Activated CD8-positive, alpha-beta T cell treated with anti-CD3 and anti-CD28 coated beads for 36 hours (primary cell): ENCODE measurements at regions of chr4 and their contacts with region 1.

Region 1: DNA sequence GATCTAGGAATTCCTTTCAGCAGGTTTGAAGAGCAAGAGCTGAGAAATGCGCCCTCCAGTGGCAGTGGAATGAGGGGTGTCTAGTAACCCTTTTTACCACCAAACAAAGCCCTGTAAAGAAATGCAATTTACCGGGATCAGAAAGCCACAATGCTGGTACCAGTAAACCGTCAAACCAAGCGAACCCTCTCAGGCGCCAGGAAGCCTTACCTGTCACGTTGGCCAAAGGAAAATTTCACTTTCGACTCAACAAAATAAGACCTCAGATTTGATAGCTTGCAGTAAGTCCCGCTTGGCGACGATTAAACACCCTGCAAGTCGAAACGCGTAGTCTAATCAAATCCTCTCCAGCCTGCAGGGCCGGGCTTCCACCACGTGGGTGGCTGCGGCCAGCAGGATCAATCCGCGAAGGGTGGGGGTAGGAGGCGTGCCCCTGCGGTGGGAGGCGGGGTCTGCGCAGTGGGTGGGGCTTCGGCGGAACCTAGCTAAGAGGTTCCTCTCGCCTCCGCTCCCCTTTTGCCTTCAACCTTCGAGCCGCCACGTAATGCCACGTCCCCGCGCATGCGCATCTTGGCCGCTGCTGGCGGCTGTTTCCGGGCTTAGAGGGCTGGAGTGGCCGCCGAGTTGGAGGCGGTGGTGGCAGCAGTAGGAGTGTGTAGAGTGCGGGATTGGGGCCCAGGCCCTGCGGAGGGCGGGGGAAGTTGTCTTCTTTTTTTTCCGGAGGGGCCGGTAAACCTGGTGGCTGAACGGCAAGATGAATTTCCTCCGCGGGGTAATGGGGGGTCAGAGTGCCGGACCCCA is at the start of gene USO1:
- DNase-seq: peak; percentile 99
- ATAC-seq: peak; percentile 95
- H3K4me3 Mint-ChIP-seq: peak within 1 kb of the TSS; percentile 91
- H3K27ac Mint-ChIP-seq: peak within 1 kb of the TSS; percentile 96
- H3K4me1 Mint-ChIP-seq: peaks cover 44% of the 10 kb centered on the region
- H3K27me3 Mint-ChIP-seq: no peaks in the 10 kb centered on the region
- CTCF ChIP-seq: peak; percentile 82
- total RNA-seq, gene USO1: 50.5 to 52.0 TPM

Region 2: DNA sequence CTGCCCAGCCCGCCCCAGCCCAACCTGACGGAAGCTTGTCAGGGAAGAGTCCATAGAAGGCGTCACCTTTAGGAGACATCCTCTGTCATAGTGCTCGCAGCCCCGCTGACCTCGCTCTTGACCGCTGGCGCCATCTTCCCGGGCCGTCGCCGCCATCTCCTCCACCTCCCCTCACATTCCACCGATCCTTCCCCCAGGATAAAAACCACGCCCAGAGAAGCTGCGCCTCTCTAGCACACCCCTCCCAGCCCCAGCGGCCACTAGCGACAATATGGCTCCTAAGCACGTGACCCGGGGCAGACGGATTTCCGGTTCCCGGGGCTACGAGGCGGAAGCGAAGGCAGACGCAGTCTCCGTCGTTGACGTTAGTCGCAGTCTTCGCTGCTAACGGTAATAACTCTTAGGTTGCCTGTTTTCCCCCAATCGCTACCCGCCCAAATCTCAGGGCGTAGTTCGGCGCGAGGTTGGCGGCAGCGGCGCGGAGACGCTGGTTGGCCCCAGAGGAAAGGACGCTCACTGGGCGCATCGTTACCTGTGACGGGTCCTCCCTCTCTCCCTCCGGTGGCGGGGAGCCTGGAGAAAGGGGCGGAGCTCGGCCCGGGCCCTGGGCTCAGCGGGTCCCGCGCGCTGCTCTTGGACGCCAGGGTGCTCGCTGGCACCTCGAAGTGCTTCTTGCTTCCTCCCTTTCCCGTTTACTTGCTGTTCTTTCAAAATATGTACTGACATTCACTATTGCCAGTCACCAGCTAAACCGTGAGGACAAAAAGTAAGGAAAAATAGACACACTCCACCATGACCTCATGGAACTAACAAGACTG is 209.9 kb before region 1 on chr4 and contains the starts of genes RCHY1 and THAP6:
- CTCF ChIA-PET with region 1: interaction called, 12 read pairs
- POLR2A ChIA-PET with region 1: interaction called, 7 read pairs
- intact Hi-C with region 1: no loop called
- DNase-seq: peak; percentile 94
- ATAC-seq: peak; percentile 91
- H3K4me3 Mint-ChIP-seq: no peak within 1 kb of the TSS
- H3K27ac Mint-ChIP-seq: peak within 1 kb of the TSS; percentile 94
- H3K4me1 Mint-ChIP-seq: peaks cover 50% of the 10 kb centered on the region
- H3K27me3 Mint-ChIP-seq: no peaks in the 10 kb centered on the region
- CTCF ChIP-seq: no peak
- total RNA-seq, gene RCHY1: 33.1 to 33.3 TPM
- total RNA-seq, gene THAP6: 16.6 to 19.1 TPM

Region 3: GRCh38 chr4:75653845-75654503 is 70.3 kb before region 1 on chr4:
- CTCF ChIA-PET with region 1: interaction called, 63 read pairs
- POLR2A ChIA-PET with region 1: interaction called, 8 read pairs
- intact Hi-C with region 1: loop called (anchors 5 kb)
- DNase-seq: no peak
- ATAC-seq: peak; percentile 11
- H3K4me3 Mint-ChIP-seq: peak overlapping the region; percentile 50
- H3K27ac Mint-ChIP-seq: peak overlapping the region; percentile 96
- H3K4me1 Mint-ChIP-seq: peaks cover 59% of the 10 kb centered on the region
- H3K27me3 Mint-ChIP-seq: no peaks in the 10 kb centered on the region
- CTCF ChIP-seq: peak; percentile 20

Region 4: DNA sequence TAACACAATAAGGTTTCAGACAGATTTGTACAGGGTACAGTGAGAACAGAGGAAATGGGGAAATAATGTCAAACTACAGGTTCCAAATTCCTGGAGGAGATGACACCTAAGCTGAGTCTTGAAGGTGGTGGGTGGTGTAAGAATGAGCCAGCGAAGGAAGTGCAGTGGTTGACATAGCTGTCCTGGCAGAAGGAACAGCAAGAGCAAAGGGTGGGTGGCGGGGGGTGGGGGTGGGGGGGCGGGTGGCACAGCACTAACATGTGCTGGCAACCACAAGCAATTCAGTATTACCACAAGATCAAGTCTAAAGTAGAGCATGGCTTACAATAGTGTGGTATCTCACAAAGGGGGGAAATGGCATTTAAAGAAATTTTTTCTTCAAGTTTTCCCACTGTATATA is 37.9 kb before region 1 on chr4:
- CTCF ChIA-PET with region 1: interaction called, 13 read pairs
- POLR2A ChIA-PET with region 1: interaction called, 9 read pairs
- intact Hi-C with region 1: no loop called
- DNase-seq: peak; percentile 52
- ATAC-seq: peak; percentile 64
- H3K4me3 Mint-ChIP-seq: no peak overlapping the region
- H3K27ac Mint-ChIP-seq: peak overlapping the region; percentile 4
- H3K4me1 Mint-ChIP-seq: peaks cover 44% of the 10 kb centered on the region
- H3K27me3 Mint-ChIP-seq: no peaks in the 10 kb centered on the region
- CTCF ChIP-seq: no peak

Region 5: DNA sequence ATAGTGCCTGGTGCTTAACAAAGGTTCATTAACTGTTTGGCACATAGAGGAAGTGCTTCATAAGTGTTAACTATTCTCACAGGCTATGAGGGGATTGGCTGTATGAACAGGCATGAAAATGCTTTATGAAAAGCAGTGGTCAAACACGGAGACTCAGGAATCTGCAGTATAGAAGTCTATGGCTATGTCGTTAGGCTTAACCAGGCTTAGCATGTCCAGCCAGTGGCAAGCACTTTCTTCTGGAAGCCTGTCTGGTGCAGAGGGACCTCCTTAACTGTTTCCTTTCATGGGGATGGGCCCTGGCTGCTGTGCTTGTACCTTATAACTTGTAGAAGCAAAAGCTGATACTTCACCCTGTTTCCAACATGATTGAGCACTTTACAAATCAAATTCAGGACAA is 99.5 kb after region 1 on chr4:
- CTCF ChIA-PET with region 1: no interaction called
- POLR2A ChIA-PET with region 1: no interaction called
- intact Hi-C with region 1: no loop called
- DNase-seq: no peak
- ATAC-seq: no peak
- H3K4me3 Mint-ChIP-seq: no peak overlapping the region
- H3K27ac Mint-ChIP-seq: no peak overlapping the region
- H3K4me1 Mint-ChIP-seq: no peaks in the 10 kb centered on the region
- H3K27me3 Mint-ChIP-seq: no peaks in the 10 kb centered on the region
- CTCF ChIP-seq: no peak

Region 6: GRCh38 chr4:75844151-75844662 is 119.9 kb after region 1 on chr4:
- CTCF ChIA-PET with region 1: interaction called, 12 read pairs
- POLR2A ChIA-PET with region 1: no interaction called
- intact Hi-C with region 1: no loop called
- DNase-seq: no peak
- ATAC-seq: no peak
- H3K4me3 Mint-ChIP-seq: no peak overlapping the region
- H3K27ac Mint-ChIP-seq: no peak overlapping the region
- H3K4me1 Mint-ChIP-seq: peaks cover 8% of the 10 kb centered on the region
- H3K27me3 Mint-ChIP-seq: no peaks in the 10 kb centered on the region
- CTCF ChIP-seq: no peak

Region 7: DNA sequence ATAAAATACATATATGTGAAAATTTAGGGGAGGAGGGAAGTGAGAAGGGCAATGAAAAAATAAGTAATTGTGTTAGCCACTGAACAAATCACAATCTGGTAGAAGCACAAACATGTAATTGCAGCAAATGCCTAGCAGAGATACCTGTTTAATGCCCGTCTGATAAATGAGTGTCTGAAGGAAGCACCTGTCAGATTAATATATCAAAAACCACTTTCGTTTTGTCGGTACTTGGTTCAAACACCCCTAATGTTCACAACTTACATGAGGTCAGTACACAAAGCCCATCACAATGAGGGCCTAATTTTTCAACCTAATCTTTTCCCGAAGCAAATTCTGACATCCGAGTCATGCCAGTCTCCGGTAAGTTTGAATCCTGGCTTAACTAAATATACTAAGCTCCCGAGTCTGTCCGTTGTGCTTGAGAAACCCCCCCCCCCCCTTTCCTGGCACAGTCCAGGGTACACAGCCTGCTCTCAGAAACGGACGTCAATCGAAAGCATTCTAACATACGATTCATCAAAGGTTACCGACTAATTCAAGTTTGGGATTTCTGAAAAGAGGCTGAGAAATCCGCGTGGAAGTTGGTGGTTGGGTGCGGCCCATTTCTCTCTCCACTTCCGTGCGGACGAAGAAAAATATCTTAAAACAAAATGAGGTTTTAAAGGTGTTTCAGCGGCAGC is 265.7 kb after region 1 on chr4:
- CTCF ChIA-PET with region 1: no interaction called
- POLR2A ChIA-PET with region 1: no interaction called
- intact Hi-C with region 1: no loop called
- DNase-seq: peak; percentile 5
- ATAC-seq: no peak
- H3K4me3 Mint-ChIP-seq: peak overlapping the region; percentile 87
- H3K27ac Mint-ChIP-seq: peak overlapping the region; percentile 85
- H3K4me1 Mint-ChIP-seq: peaks cover 29% of the 10 kb centered on the region
- H3K27me3 Mint-ChIP-seq: peaks cover 3% of the 10 kb centered on the region
- CTCF ChIP-seq: no peak